K562 (cell line): ENCODE measurements at regions of chr6 and their contacts with region 1.

Region 1: GRCh38 chr6:161694995-161695394 is 421.1 kb upstream of the AGPAT4 start:
- DNase-seq: peak; percentile 22 to 49 (median 34)
- ATAC-seq: peak; percentile 94
- H3K4me3 ChIP-seq: no peak overlapping the region
- H3K27ac ChIP-seq: no peak overlapping the region
- H3K4me1 ChIP-seq: no peaks in the 10 kb centered on the region
- H3K27me3 ChIP-seq: no peaks in the 10 kb centered on the region
- CTCF ChIP-seq: peak; percentile 50 to 69 (median 69); a peak in 5 of 6 replicates
- EP300 ChIP-seq: no peak
- POLR2A ChIP-seq: no peak
- RAD21 ChIP-seq: peak; percentile 63 to 66

Region 2: GRCh38 chr6:161418463-161418945 is 276.5 kb before region 1 on chr6:
- CTCF ChIA-PET with region 1: no interaction called
- POLR2A ChIA-PET with region 1: no interaction called
- in situ Hi-C with region 1: no loop called
- intact Hi-C with region 1: loop called (anchors 1 kb)
- DNase-seq: peak; percentile 57 to 81 (median 63)
- ATAC-seq: peak; percentile 87
- H3K4me3 ChIP-seq: no peak overlapping the region
- H3K27ac ChIP-seq: no peak overlapping the region
- H3K4me1 ChIP-seq: peaks cover 3 to 8% of the 10 kb centered on the region in 2 experiments; a peak in 4 of 5 replicates
- H3K27me3 ChIP-seq: peaks cover 39 to 55% of the 10 kb centered on the region in 2 experiments; a peak in 4 of 5 replicates
- CTCF ChIP-seq: peak; percentile 62 to 85 (median 76); a peak in 5 of 6 replicates
- EP300 ChIP-seq: no peak
- POLR2A ChIP-seq: no peak
- RAD21 ChIP-seq: peak; percentile 77 to 85

Region 3: DNA sequence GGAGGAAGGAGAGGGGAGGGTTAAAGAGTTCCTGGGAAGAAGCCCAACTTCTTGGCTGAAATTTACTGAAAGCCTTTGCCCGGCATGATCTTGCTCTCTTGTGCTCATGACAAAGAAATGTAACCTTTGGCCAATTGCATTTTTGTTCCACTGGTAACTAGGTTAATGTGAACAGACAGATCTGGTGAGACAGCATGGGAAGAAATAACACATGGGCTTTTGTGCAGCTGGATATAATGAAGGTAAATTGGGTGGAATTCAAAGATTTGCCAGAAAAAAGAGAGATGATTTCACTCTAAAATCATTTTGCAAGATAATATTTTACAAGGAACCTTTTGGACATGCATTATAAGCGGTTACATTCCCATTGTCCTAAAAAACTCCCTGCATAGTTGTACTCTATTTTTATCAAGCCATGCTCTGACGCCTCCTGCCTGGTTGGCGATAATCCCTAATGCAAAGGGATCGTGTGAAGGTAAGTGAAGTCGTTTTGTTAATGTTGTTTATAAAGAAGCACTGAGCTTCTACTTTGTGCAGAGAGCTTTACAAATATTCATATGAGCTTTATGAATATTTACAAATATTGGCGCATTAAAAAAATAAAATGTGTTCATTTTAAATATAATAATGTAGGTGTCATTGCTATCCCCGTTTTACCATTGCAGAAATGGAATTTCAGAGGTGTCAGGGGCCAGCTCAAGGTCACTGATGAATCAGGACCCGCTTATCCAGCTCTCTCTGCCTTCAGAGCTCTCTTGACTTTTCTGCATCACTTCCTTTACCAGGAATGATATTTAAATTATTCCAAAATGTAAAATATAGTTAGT is 259.9 kb before region 1 on chr6:
- CTCF ChIA-PET with region 1: no interaction called
- POLR2A ChIA-PET with region 1: no interaction called
- in situ Hi-C with region 1: no loop called
- intact Hi-C with region 1: loop called (anchors 5 kb)
- DNase-seq: no peak
- ATAC-seq: no peak
- H3K4me3 ChIP-seq: no peak overlapping the region
- H3K27ac ChIP-seq: no peak overlapping the region
- H3K4me1 ChIP-seq: peaks cover 3 to 4% of the 10 kb centered on the region in 2 experiments; a peak in 4 of 5 replicates
- H3K27me3 ChIP-seq: peaks cover 30 to 31% of the 10 kb centered on the region in 2 experiments
- CTCF ChIP-seq: no peak
- EP300 ChIP-seq: no peak
- POLR2A ChIP-seq: no peak
- RAD21 ChIP-seq: no peak

Region 4: DNA sequence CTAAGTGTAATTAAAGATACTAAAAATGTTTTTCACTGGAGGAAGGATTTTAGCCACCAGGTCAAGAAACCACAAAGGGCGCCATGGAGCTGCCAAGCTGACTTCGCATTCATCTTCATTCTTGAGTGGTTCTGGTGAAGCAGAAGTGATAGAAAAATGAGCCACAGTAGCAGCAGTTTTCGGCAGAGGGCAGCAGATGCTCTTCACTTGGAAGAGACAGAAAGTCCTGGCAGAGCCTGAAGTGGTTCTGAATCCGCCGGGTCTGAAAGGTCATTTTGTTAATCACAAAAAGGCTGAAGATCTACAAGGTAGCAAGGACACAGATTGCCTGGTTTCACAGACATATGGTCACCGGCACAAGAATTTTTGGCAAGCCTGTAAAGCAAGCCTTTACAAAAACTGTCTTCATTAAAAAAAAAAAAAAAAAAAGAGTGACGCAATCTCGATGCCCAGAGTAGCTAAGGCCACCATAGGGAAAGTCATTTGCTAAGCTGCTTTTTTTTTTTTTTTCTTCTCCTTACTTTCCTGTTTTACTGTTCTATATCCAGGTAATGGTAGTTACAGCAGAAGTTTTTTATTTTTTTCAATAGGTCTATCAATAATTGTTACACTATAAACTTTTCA is 76.1 kb before region 1 on chr6:
- CTCF ChIA-PET with region 1: no interaction called
- POLR2A ChIA-PET with region 1: interaction called, 3 read pairs
- in situ Hi-C with region 1: no loop called
- intact Hi-C with region 1: loop called (anchors 1 kb)
- DNase-seq: peak in 3 of 4 experiments; percentile 16 to 51 (median 37)
- ATAC-seq: peak; percentile 92
- H3K4me3 ChIP-seq: no peak overlapping the region
- H3K27ac ChIP-seq: no peak overlapping the region
- H3K4me1 ChIP-seq: no peaks in the 10 kb centered on the region
- H3K27me3 ChIP-seq: no peaks in the 10 kb centered on the region
- CTCF ChIP-seq: peak; percentile 54 to 59 (median 56)
- EP300 ChIP-seq: no peak
- POLR2A ChIP-seq: no peak
- RAD21 ChIP-seq: peak; percentile 27 to 58